AG04450 (cell line): ENCODE measurements at regions of chr1 and their contacts with region 1.

Region 1: DNA sequence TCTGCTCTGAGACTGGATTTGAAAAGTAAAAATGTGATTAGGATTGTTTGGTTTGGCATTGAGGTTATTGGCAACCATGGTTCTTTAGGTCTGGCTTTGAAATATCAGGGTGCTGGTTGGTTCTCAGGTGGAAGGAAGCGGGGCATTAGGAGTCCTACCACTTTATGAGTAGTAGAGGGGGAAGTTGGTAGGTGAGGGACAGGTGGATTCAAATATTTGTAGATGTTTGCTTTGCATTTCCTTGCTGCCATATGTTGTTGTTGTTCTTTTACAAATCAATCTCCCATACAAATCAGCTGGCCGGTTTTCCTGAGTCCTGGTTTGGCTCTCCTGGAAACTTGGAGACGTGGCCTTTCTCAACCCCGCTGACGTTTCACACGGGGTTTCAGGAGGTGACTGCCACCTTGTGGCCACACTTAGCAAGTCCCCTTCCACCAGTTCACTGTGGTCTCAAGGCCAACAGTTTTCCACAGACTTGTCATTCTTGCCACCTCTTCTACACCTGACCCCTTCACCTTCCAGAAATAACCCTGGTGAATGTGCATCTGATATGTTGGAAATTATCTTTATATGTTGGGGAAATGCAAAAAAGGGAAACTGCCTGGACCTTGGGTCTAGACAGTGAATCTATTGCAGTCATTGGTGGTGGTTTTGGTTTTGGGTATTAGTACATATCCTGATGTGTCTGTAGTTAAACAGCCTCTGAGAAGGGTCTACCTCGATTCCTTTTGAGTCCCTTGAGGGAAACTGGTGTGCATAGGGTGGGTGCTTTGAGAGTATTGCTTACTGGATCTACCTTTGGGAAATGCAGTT is 127.0 kb upstream of the KIAA0040 start:
- DNase-seq: peak; percentile 23
- H3K4me3 ChIP-seq: no peak overlapping the region
- H3K27ac ChIP-seq: no peak overlapping the region
- H3K27me3 ChIP-seq: no peaks in the 10 kb centered on the region
- CTCF ChIP-seq: peak; percentile 81

Region 2: GRCh38 chr1:175035865-175036264 is 283.8 kb before region 1 on chr1:
- CTCF ChIA-PET with region 1: interaction called, 11 read pairs
- POLR2A ChIA-PET with region 1: no interaction called
- DNase-seq: no peak
- H3K4me3 ChIP-seq: no peak overlapping the region
- H3K27ac ChIP-seq: no peak overlapping the region
- H3K27me3 ChIP-seq: peaks cover 7% of the 10 kb centered on the region
- CTCF ChIP-seq: no peak

Region 3: DNA sequence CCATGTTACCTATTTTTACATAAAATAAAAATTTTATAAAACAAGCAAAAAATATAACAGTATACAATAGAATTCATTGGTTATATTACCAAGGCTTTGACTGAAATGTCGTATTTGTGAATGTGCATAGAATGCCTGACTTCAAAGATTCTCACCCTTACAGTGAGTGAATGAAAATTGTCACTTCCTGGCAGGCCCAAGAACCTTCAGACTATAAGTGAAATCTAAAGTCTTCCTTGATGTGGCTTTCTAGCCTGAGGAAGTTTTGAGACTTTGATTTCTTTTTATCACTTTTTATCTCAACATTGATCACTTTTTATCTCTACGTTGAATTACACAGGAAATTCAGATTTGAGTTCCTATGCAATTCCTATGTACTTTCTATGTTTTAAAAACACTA is 22.3 kb before region 1 on chr1:
- CTCF ChIA-PET with region 1: no interaction called
- POLR2A ChIA-PET with region 1: no interaction called
- DNase-seq: no peak
- H3K4me3 ChIP-seq: no peak overlapping the region
- H3K27ac ChIP-seq: no peak overlapping the region
- H3K27me3 ChIP-seq: no peaks in the 10 kb centered on the region
- CTCF ChIP-seq: no peak

Region 4: GRCh38 chr1:175338387-175339135 is 18.9 kb after region 1 on chr1:
- CTCF ChIA-PET with region 1: no interaction called
- POLR2A ChIA-PET with region 1: no interaction called
- DNase-seq: no peak
- H3K4me3 ChIP-seq: no peak overlapping the region
- H3K27ac ChIP-seq: no peak overlapping the region
- H3K27me3 ChIP-seq: no peaks in the 10 kb centered on the region
- CTCF ChIP-seq: peak; percentile 28; the same call in 1 of the 2 replicates

Region 5: GRCh38 chr1:175353066-175353465 is 33.4 kb after region 1 on chr1:
- CTCF ChIA-PET with region 1: no interaction called
- POLR2A ChIA-PET with region 1: no interaction called
- DNase-seq: no peak
- H3K4me3 ChIP-seq: no peak overlapping the region
- H3K27ac ChIP-seq: no peak overlapping the region
- H3K27me3 ChIP-seq: no peaks in the 10 kb centered on the region
- CTCF ChIP-seq: no peak